ENCODE measurements at regions of chr12 and their contacts with region 1.

Region 1: DNA sequence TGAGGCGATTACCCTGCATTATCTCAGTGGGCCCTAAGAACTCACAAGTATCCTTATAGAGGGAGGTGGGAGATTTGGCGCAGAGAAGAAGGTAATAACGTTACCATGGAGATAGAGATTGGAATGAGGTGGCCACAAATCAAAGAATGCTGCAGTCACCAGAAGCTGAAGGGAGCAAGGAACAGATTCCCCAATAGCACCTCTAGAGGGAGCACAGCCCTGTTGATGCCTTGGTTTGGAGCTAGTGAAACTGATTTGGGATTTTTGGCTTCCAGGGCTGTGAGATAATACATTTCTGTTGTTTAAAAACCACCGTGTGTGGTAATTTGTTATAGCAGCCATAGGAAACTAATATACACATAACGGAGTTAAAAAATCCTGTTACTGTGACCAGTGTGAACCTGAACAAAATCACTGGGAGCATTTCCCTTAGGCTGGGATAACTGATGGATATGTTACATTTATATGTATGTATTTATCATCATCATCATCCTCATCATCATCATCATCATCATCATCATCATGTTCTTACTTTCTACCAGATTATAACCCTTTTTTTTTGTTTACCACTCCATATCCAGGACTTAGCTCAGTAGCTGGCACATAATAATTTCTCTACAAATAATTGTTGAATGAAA is 100.3 kb downstream of the LIN7A start:
- DNase-seq: no peak
- CTCF ChIP-seq: peak; percentile 67

Region 2: DNA sequence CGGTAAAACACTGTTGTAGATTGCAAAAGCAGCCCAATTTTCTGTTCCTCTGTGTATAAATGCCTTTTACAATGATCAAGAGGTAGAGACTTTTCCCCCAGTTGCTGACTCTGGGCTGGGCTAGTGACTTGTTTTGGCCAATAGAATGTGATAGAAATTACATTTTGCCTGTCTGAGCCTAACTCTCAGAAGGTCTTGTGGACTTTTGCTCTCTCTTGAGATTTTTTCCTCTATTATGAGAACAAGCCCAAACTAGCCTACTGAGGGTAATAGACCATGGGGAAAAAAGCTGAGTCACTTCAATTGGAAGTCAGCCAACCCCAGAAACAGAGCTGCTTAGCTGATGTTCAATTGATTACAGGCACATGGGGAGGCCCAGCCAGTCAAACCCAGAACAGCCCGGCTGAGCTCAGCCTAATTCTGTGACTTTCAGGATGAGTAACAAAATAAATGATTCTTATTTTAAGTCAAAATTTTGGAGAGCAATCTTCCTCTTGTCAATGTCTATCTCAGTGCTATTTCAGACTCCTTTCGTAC is 59.4 kb before region 1 on chr12:
- CTCF ChIA-PET with region 1: interaction called, 11 read pairs
- POLR2A ChIA-PET with region 1: no interaction called
- DNase-seq: peak; percentile 59
- CTCF ChIP-seq: no peak

Region 3: GRCh38 chr12:80814453-80814852 is 23.0 kb before region 1 on chr12:
- CTCF ChIA-PET with region 1: interaction called, 22 read pairs
- POLR2A ChIA-PET with region 1: no interaction called
- DNase-seq: no peak
- CTCF ChIP-seq: no peak

Region 4: DNA sequence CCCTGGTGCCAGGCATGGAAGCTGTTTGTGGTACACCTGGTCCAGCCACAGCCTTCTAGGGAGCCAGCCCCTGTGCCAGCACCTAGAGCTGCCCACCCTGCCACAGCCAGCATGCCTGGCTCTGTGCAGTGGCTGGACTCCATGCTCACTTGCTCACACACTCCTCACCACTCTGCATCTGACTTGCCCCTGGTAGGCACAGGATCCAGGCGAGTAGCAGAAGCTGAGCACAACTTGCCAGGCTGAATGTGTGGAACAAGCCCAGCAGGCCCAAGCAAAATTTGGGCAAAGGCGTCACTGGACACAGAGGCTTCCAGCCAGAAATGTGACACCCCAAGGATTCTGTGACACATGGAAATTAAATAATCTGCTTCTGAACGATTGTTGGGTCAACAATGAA is 14.1 kb before region 1 on chr12:
- CTCF ChIA-PET with region 1: interaction called, 36 read pairs
- POLR2A ChIA-PET with region 1: no interaction called
- DNase-seq: no peak
- CTCF ChIP-seq: no peak

Region 5: DNA sequence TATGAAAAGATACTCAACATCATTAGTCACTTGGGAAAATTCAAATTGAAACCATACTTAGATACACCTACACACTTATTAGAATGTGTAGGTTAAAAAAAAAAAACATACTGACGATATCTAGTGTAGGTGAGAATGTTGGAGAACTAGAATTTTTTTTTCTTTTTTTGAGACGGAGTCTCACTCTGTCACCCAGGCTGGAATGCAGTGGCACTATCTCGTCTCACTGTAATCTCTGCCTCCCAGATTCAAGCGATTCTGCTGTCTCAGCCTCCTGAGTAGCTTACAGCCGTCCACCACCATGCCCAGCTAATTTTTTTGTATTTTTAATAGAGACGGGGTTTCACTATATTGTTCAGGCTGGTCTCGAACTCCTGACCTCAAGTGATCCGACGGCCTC is 16.1 kb after region 1 on chr12:
- CTCF ChIA-PET with region 1: interaction called, 27 read pairs
- POLR2A ChIA-PET with region 1: no interaction called
- DNase-seq: no peak
- CTCF ChIP-seq: no peak